ENCODE measurements at regions of chr4 and their contacts with region 1.

Region 1: DNA sequence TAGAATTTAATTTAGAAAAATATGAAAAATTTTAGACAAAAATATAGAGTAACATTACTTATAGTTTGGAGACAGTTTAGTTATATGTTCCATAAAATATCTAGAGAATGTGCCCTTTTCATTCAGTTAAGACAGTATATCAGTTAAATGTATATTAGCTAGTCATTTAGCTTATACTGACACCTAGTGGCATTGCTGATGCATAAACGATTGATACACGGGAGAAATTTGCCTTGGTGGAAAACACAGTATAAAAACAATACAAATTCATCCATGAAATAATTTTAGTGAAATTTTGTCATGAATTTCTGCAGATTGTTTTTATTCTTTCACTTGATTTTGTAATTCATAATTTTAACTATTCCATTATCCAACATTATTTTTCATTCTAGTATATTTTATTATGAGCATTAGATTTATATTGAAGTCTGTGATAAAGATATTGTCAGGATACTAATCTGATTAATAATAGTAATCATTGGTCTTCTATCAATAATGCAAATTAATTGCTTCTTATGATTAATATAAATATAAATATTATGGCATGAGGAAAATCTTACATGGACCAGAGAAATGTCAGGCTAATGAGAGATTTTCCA is 219.0 kb downstream of the TLL1 start:
- DNase-seq: peak; percentile 15
- H3K4me3 ChIP-seq: no peak overlapping the region
- H3K27ac ChIP-seq: no peak overlapping the region
- H3K27me3 ChIP-seq: no peaks in the 10 kb centered on the region
- CTCF ChIP-seq: peak; percentile 56

Region 2: DNA sequence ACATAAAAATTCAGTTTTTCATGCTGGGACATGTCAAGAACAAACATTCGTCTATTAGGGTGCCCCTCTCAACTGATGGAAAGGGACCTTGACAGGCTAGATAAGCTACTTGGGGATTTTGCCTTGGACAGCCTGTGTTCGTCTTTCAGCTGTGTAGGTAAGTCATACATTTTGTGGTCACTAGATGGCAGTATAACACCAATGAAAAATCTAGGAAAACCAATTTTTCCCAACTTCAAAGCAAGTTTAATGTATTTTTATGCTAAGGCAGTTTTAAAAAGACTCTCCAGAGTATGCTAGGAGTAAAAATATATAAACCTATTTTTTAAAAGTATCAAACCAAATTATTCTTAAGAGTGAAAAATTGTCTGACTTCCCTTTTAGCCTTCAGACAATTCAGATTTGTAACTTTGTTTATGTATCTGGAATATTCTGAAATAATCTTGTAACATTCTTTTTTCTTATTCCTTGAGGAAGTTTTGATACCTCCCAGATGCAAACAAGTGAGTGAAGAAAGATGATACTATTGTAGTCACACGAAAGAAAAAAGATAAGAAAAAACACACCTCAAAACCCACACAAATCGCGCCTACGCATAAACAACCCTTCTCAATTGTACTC is 554.9 kb before region 1 on chr4:
- in situ Hi-C with region 1: loop called (anchors 25 kb)
- DNase-seq: peak; percentile 26
- H3K4me3 ChIP-seq: no peak overlapping the region
- H3K27ac ChIP-seq: no peak overlapping the region
- H3K27me3 ChIP-seq: no peaks in the 10 kb centered on the region
- CTCF ChIP-seq: peak; percentile 47

Region 3: DNA sequence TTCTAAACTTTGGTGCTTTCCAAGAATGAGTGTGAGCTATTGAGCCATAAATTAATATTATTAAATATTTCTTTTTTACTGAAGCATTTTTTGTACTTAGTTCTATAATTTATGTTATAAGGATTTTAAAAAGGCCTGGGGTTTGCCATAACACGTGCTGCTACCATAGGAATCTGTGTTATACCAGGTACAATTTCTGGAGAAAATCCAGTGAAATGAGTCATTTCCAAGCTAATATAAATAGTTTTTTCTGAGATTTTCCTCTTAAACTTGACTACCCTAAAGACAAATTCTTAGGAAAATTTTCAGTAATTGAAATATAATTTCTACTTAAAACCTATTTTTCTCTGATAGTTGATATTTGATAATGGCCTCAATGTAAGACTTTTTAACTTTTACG is 88.2 kb before region 1 on chr4:
- in situ Hi-C with region 1: no loop called
- DNase-seq: no peak
- H3K4me3 ChIP-seq: no peak overlapping the region
- H3K27ac ChIP-seq: no peak overlapping the region
- H3K27me3 ChIP-seq: no peaks in the 10 kb centered on the region
- CTCF ChIP-seq: no peak

Region 4: GRCh38 chr4:166252487-166253402 is 160.7 kb after region 1 on chr4:
- in situ Hi-C with region 1: no loop called
- DNase-seq: peak; percentile 24
- H3K4me3 ChIP-seq: no peak overlapping the region
- H3K27ac ChIP-seq: no peak overlapping the region
- H3K27me3 ChIP-seq: no peaks in the 10 kb centered on the region
- CTCF ChIP-seq: peak; percentile 78